Activated CD4-positive, alpha-beta memory T cell treated with anti-CD3 and anti-CD28 coated beads for 36 hours (primary cell): ENCODE measurements at regions of chr9 and their contacts with region 1.

Region 1: GRCh38 chr9:130042833-130043653 is at the start of gene FNBP1:
- DNase-seq: peak; percentile 86
- H3K4me3 Mint-ChIP-seq: peak within 1 kb of the TSS; percentile 98
- H3K27ac Mint-ChIP-seq: peak within 1 kb of the TSS; percentile 99
- H3K4me1 Mint-ChIP-seq: peaks cover 37% of the 10 kb centered on the region
- H3K27me3 Mint-ChIP-seq: no peaks in the 10 kb centered on the region
- total RNA-seq, gene FNBP1: 215 to 228 TPM

Region 2: DNA sequence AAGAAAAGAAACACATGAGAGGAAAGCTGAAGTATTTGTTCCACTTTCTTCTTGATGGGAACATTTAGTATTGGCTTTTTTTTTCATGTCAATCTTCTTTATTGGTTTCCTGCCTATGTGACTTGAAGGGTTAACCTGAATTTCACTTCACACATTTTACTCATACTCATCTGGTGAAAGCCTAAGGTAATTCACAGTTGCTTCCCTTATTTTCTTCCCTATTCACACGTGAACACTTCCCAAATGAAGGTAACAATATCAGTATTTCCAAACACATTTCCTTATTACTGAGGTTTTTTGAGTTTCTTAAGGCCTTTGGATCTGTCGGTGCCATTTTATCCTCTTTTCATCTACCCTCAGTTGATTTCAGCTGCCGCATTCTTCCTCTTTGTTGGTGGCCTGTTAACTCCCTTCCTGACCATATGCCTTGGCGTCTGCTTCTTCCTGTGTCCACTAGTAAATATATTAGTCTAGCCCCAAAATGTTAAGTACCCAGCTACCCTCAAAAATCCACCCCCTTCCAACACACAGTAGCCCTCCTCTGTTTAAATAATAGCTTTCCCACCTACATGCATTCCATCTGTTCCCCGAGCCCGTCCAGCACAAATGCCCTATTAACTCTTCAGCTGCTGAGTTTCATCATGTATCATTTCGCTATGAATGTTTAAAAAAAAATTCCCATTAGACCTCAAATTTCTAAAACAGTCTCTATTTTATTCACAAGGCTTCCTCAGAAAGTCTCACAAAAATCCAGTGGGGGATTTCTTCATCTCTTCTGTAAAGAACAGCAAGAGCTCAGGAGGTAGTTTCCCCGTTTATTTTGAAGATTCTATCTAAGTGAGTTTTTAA is 110.5 kb before region 1 on chr9:
- CTCF ChIA-PET with region 1: no interaction called
- POLR2A ChIA-PET with region 1: interaction called, 12 read pairs
- intact Hi-C with region 1: no loop called
- DNase-seq: no peak
- H3K4me3 Mint-ChIP-seq: peak overlapping the region; percentile 48
- H3K27ac Mint-ChIP-seq: peak overlapping the region; percentile 87
- H3K4me1 Mint-ChIP-seq: peaks cover 67% of the 10 kb centered on the region
- H3K27me3 Mint-ChIP-seq: no peaks in the 10 kb centered on the region

Region 3: GRCh38 chr9:129988607-129989361 is 54.3 kb before region 1 on chr9:
- CTCF ChIA-PET with region 1: interaction called, 4 read pairs
- POLR2A ChIA-PET with region 1: interaction called, 43 read pairs
- intact Hi-C with region 1: no loop called
- DNase-seq: peak; percentile 51
- H3K4me3 Mint-ChIP-seq: peak overlapping the region; percentile 10
- H3K27ac Mint-ChIP-seq: peak overlapping the region; percentile 87
- H3K4me1 Mint-ChIP-seq: peaks cover 78% of the 10 kb centered on the region
- H3K27me3 Mint-ChIP-seq: no peaks in the 10 kb centered on the region

Region 4: GRCh38 chr9:130010151-130010988 is 32.7 kb before region 1 on chr9:
- CTCF ChIA-PET with region 1: interaction called, 5 read pairs
- POLR2A ChIA-PET with region 1: interaction called, 16 read pairs
- intact Hi-C with region 1: loop called (anchors 1 kb)
- DNase-seq: peak; percentile 71
- H3K4me3 Mint-ChIP-seq: peak overlapping the region; percentile 61
- H3K27ac Mint-ChIP-seq: peak overlapping the region; percentile 93
- H3K4me1 Mint-ChIP-seq: peaks cover 84% of the 10 kb centered on the region
- H3K27me3 Mint-ChIP-seq: no peaks in the 10 kb centered on the region

Region 5: DNA sequence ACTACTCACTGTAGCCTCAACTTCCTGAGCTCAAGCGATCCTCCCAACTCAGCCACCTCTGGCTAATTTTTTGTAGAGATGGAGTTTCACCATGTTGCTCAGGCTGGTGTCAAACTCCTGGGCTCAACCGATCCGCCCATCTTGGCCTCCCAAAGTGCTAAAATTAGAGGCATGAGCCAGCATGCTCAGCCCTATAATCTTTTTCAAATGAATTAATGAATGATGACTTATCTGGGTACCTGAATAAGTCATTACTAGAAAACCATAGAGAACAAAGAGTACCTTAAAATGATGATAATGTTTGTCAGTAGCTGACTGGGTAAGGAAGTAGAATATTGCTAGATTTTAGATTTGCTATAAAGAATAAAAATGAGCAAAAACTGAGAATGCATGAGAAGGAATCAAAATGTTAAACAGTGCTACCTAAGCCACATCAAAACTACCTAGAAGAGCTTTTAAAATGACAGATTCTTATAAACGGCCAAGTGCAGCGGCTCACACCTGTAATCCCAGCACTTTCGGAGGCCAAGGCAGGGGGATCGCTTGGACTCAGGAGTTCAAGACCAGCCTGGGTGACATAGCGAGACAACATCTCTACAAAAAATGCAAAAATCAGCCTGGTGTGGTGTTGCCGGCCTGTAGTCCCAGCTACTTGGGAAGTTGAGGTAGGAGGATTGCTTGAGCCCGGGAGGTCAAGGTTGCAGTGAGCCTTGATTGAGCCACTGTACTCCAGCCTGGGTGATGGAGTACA is 13.6 kb before region 1 on chr9:
- CTCF ChIA-PET with region 1: interaction called, 18 read pairs
- POLR2A ChIA-PET with region 1: interaction called, 88 read pairs
- intact Hi-C with region 1: loop called (anchors 1 kb)
- DNase-seq: peak; percentile 77
- H3K4me3 Mint-ChIP-seq: peak overlapping the region; percentile 33
- H3K27ac Mint-ChIP-seq: peak overlapping the region; percentile 92
- H3K4me1 Mint-ChIP-seq: peaks cover 94% of the 10 kb centered on the region
- H3K27me3 Mint-ChIP-seq: no peaks in the 10 kb centered on the region

Region 6: DNA sequence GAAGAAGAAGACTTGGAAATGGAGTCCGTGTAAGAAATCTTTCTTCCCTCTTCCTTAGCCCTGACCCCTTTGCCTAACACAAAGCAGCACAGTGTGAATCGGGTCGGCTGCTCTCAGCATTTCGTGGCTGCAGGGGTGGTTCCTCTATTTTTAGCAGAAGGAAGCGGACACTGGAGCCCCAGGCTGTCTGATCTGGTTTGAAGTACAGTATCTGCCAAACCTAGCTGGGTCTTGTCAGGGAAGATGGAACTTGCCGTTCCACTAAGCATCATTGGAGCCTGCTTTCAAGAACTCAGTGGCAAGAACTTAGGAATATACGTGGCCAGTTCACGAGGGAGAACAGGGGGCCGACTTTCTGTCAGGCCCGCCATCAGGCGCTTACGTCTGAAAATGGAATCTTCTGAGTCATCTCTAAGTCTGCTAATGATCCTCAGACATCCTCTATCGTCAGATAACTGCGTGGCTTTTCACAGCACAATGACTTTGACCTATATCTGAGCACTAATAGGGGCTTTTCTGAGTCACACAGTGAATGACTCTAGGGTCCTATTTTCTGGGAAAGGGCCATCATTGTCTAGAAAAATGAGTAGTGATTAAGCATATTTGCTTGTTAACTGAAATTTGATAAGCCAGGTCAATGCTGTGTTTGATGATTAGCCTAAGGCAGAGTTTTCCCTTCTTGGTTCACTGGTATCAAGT is 85.8 kb after region 1 on chr9:
- CTCF ChIA-PET with region 1: interaction called, 4 read pairs
- POLR2A ChIA-PET with region 1: interaction called, 3 read pairs
- intact Hi-C with region 1: loop called (anchors 5 kb)
- DNase-seq: peak; percentile 78
- H3K4me3 Mint-ChIP-seq: peak overlapping the region; percentile 71
- H3K27ac Mint-ChIP-seq: peak overlapping the region; percentile 98
- H3K4me1 Mint-ChIP-seq: peaks cover 49% of the 10 kb centered on the region
- H3K27me3 Mint-ChIP-seq: no peaks in the 10 kb centered on the region